ENCODE measurements at regions of chr15 and their contacts with region 1.

Region 1: GRCh38 chr15:26260517-26261133 is 397.5 kb upstream of the ATP10A start:
- DNase-seq: peak; percentile 47 to 72
- H3K4me3 ChIP-seq: no peak overlapping the region
- H3K27ac ChIP-seq: no peak overlapping the region
- H3K4me1 ChIP-seq: peaks cover 0 to 2% (median 0%) of the 10 kb centered on the region in 4 experiments; a peak in 4 of 7 replicates
- H3K27me3 ChIP-seq: no peaks in the 10 kb centered on the region
- CTCF ChIP-seq: peak; percentile 88 to 95 (median 94)
- EP300 ChIP-seq: no peak
- POLR2A ChIP-seq: no peak
- RAD21 ChIP-seq: peak; percentile 95 to 97

Region 2: DNA sequence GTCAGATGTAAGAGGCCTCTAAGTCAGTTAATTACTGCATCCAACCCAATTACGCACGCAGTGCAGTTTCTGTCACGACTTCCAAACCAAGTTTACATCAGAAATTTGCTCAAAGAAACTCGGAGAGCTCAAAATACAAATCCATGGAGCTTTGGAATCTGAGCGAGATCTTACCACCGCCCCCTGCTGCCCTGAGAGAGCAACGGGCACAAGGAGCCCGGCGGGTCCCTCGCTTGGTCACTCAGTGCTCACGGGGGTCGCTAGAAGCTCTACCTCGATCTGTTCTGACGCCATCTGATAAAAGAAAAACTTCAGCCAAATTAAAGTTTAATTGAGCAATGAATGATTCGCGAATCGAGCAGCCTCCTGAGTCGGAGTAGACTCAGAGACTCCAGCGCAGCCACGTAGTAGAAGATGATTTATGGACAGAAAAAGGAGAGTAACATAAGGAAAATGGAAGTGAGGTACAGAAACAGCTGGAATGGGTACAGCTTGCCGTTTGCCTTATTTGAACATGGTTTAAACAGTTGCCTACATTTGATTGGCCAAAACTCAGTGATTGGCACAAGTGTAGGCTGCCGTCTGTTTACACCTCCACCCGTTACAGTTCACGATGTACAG is 164.8 kb before region 1 on chr15:
- CTCF ChIA-PET with region 1: interaction called, 22 read pairs
- POLR2A ChIA-PET with region 1: no interaction called
- DNase-seq: peak; percentile 38 to 74
- H3K4me3 ChIP-seq: no peak overlapping the region
- H3K27ac ChIP-seq: no peak overlapping the region
- H3K4me1 ChIP-seq: no peaks in the 10 kb centered on the region
- H3K27me3 ChIP-seq: peaks cover 0 to 1% (median 0%) of the 10 kb centered on the region in 4 experiments; a peak in 1 of 7 replicates
- CTCF ChIP-seq: peak; percentile 61 to 71 (median 69)
- EP300 ChIP-seq: no peak
- POLR2A ChIP-seq: no peak
- RAD21 ChIP-seq: peak; percentile 50 to 71

Region 3: GRCh38 chr15:26179906-26180305 is 80.7 kb before region 1 on chr15:
- CTCF ChIA-PET with region 1: interaction called, 60 read pairs
- POLR2A ChIA-PET with region 1: no interaction called
- DNase-seq: peak; percentile 63 to 79
- H3K4me3 ChIP-seq: no peak overlapping the region
- H3K27ac ChIP-seq: no peak overlapping the region
- H3K4me1 ChIP-seq: peaks cover 0 to 8% (median 4%) of the 10 kb centered on the region in 4 experiments; a peak in 4 of 7 replicates
- H3K27me3 ChIP-seq: no peaks in the 10 kb centered on the region
- CTCF ChIP-seq: peak; percentile 64 to 97 (median 86)
- EP300 ChIP-seq: no peak
- POLR2A ChIP-seq: no peak
- RAD21 ChIP-seq: peak; percentile 91 to 98

Region 4: GRCh38 chr15:26242565-26243071 is 18.0 kb before region 1 on chr15:
- CTCF ChIA-PET with region 1: interaction called, 22 read pairs
- POLR2A ChIA-PET with region 1: interaction called, 4 read pairs
- DNase-seq: peak; percentile 61 to 65
- H3K4me3 ChIP-seq: peak overlapping the region in 1 of 4 experiments; percentile 2; a peak in 1 of 8 replicates
- H3K27ac ChIP-seq: peak overlapping the region; percentile 90
- H3K4me1 ChIP-seq: peaks cover 8 to 18% (median 11%) of the 10 kb centered on the region in 4 experiments
- H3K27me3 ChIP-seq: peaks cover 0 to 2% (median 0%) of the 10 kb centered on the region in 4 experiments; a peak in 1 of 7 replicates
- CTCF ChIP-seq: peak in 2 of 3 experiments; percentile 12 to 20; a peak in 2 of 4 replicates
- EP300 ChIP-seq: peak in 1 of 2 experiments; percentile 58; a peak in 1 of 3 replicates
- POLR2A ChIP-seq: peak in 1 of 2 experiments; percentile 78; a peak in 2 of 3 replicates
- RAD21 ChIP-seq: peak; percentile 25 to 27

Region 5: GRCh38 chr15:26294059-26294689 is 33.5 kb after region 1 on chr15:
- CTCF ChIA-PET with region 1: interaction called, 10 read pairs
- POLR2A ChIA-PET with region 1: no interaction called
- DNase-seq: peak; percentile 61 to 71
- H3K4me3 ChIP-seq: no peak overlapping the region
- H3K27ac ChIP-seq: no peak overlapping the region
- H3K4me1 ChIP-seq: peaks cover 2 to 18% (median 4%) of the 10 kb centered on the region in 4 experiments; a peak in 5 of 7 replicates
- H3K27me3 ChIP-seq: no peaks in the 10 kb centered on the region
- CTCF ChIP-seq: peak; percentile 59 to 79 (median 73)
- EP300 ChIP-seq: no peak
- POLR2A ChIP-seq: no peak
- RAD21 ChIP-seq: peak; percentile 78 to 80

Region 6: GRCh38 chr15:26340376-26340775 is 79.8 kb after region 1 on chr15:
- CTCF ChIA-PET with region 1: no interaction called
- POLR2A ChIA-PET with region 1: no interaction called
- DNase-seq: no peak
- H3K4me3 ChIP-seq: no peak overlapping the region
- H3K27ac ChIP-seq: no peak overlapping the region
- H3K4me1 ChIP-seq: no peaks in the 10 kb centered on the region
- H3K27me3 ChIP-seq: no peaks in the 10 kb centered on the region
- CTCF ChIP-seq: no peak
- EP300 ChIP-seq: no peak
- POLR2A ChIP-seq: no peak
- RAD21 ChIP-seq: no peak